GM10248 (cell line): ENCODE measurements at regions of chr14 and their contacts with region 1.

Region 1: DNA sequence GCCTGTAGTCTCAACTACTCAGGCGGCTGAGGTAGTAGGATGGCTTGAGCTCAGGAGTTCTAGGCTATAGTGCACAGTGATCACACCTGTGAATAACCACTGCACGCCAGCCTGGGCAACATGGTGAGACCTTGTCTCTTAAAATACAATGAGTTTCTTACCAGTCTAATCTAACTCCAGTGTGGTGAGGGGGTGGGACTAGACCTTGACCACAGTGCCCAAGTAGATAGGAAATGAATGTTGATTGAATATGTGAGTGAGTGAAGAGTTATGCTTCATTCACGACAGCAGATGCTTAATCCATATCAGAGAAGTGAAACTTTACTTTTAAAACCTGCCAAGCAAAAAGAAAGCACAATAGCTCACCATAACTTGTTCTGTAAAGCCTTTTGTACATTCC is 11.2 kb upstream of the AK7 start:
- DNase-seq: no peak
- CTCF ChIP-seq: no peak

Region 2: DNA sequence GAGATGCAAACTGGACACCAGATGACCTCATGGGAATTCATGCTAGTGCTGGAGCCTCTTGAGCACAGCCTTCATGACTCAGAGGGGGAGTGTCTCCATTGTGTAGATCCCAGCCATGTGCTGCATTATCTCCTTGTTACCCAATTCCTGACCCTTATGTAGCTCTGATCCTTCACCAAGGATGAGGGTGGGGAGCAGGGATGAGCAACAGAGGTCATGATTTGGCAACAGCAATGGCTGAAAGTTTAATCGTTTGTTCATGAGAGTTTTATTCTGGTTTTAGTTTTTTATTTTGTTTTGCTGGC is 134.2 kb before region 1 on chr14:
- CTCF ChIA-PET with region 1: no interaction called
- POLR2A ChIA-PET with region 1: no interaction called
- DNase-seq: no peak
- CTCF ChIP-seq: no peak

Region 3: DNA sequence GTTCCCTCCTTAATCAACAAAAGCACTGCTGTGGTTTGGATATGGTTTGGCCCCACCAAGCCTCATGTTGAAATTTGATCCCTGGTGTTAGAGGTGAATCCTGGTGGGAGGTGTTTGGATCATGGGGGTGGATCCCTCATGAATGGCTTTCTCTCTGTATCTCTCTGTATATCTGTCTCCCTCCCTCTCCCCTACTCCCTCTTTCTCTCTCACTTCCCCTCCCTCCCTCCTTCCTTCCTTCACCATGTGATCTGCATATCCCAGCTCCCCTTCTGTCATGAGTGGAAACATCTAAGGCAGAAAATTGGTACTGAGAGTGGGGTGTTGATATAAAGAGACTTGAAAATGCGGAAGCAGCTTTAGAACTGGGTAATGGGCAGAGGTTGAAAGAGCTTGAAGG is 12.2 kb before region 1 on chr14:
- CTCF ChIA-PET with region 1: interaction called, 19 read pairs
- POLR2A ChIA-PET with region 1: no interaction called
- DNase-seq: no peak
- CTCF ChIP-seq: no peak